Ascending aorta (tissue), 2 donors: ENCODE measurements at regions of chr3 and their contacts with region 1.

Region 1: GRCh38 chr3:191253089-191253799 is 54.2 kb downstream of the OSTN start:
- DNase-seq: no peak
- H3K4me3 ChIP-seq: no peak overlapping the region
- H3K27ac ChIP-seq: no peak overlapping the region
- H3K4me1 ChIP-seq: no peaks in the 10 kb centered on the region
- H3K27me3 ChIP-seq: no peaks in the 10 kb centered on the region
- CTCF ChIP-seq: no peak

Region 2: DNA sequence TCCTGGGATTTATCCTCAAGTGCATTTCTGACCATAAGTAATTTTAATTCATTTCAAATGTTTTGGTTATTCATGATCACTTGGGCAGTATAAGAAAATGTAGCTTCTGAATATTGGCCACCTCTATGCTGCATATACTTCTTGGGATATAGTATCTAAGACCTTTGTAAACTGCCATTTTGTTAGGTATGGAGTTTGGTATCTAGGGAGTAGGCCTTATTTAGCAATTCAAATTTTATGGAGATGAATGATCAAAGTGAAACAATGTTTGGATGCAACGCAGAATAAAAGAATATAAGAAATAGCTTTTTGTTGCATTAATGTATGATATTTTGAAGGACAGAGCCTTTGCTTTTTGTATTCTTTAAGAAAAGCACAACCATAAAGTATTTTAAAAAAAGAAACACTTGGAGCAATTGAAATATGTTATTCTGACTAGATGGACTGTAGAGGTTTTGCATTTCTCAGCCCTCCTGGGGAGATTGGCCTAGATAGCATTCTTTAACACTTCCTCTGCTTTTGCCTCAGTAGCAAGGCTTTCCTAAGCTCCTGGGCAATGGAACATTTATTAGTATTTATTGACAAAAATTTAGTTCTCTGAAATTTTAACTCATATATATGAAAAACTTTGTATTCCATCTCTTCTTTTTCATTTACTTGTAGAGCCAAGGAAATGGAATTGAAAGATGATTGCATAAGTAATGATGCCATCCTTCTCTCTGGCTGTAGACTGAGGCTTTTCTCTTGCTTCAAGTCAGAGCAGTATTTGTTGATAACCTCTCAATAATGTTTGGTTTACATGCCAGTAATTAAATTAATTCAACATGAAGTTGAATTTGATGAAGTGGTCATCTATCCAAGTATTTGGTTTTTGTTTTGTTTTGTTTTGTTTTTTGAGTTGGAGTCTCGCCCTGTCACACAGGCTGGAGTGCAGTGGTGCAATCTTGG is 138.9 kb after region 1 on chr3:
- intact Hi-C with region 1: loop called (anchors 10 kb)
- DNase-seq: no peak
- H3K4me3 ChIP-seq: no peak overlapping the region
- H3K27ac ChIP-seq: no peak overlapping the region
- H3K4me1 ChIP-seq: no peaks in the 10 kb centered on the region
- H3K27me3 ChIP-seq: no peaks in the 10 kb centered on the region
- CTCF ChIP-seq: no peak